Posterior vena cava (tissue), 2 donors: ENCODE measurements at regions of chr1 and their contacts with region 1.

Region 1: GRCh38 chr1:36099681-36100341 is 11.1 kb downstream of the ADPRS start:
- DNase-seq: peak; percentile 92

Region 2: GRCh38 chr1:34129626-34130025 is 1970.2 kb before region 1 on chr1:
- intact Hi-C with region 1: loop called in 1 of 2 experiments (anchors 10 kb)
- DNase-seq: no peak

Region 3: GRCh38 chr1:36014722-36015220 is 85.0 kb before region 1 on chr1:
- intact Hi-C with region 1: no loop called
- DNase-seq: no peak

Region 4: GRCh38 chr1:36149237-36149972 is 49.6 kb after region 1 on chr1 and contains the start of gene TRAPPC3:
- intact Hi-C with region 1: loop called in 1 of 2 experiments (anchors 10 kb)
- DNase-seq: peak; percentile 100
- total RNA-seq, gene TRAPPC3: 51.4 to 54.7 TPM

Region 5: DNA sequence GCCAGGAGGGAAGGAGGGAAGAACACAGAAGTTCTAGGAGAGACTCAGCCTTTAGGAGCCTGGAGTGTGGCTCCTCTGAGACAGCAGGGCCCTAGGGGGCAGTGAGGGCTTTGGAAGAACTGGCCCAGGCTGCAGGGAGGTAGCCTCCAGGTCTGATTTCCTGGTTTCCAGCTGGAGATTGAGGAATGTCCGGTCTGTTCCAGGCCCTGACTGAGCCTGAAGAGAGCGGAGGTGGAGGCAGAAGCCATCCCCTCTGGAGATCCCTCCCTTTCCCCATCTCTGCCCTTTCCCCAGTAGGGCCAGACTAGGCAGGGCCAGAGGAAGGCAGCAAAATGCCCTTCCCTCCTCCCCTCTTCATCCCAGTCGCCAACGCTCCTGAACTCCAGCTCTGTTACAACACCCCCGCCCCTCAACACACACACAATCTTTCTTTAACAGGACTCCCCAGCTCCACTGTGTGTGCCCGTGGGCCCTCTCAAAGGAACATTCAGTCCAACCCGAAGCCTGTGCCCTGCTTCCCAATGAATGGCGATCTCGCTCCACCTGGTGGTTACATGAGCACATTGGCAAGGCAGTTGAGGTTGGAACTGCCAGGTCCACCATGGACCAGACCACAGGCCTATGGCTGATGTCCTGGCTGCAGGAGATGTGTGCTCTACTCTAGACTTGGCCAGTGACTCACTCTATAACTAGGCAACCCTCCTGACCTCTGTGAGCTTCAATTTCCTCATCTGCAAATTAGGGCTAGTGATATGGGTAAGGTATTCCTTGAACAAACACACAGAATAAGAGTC is 88.2 kb after region 1 on chr1:
- intact Hi-C with region 1: loop called (anchors 2 to 5 kb)
- DNase-seq: peak; percentile 94

Region 6: DNA sequence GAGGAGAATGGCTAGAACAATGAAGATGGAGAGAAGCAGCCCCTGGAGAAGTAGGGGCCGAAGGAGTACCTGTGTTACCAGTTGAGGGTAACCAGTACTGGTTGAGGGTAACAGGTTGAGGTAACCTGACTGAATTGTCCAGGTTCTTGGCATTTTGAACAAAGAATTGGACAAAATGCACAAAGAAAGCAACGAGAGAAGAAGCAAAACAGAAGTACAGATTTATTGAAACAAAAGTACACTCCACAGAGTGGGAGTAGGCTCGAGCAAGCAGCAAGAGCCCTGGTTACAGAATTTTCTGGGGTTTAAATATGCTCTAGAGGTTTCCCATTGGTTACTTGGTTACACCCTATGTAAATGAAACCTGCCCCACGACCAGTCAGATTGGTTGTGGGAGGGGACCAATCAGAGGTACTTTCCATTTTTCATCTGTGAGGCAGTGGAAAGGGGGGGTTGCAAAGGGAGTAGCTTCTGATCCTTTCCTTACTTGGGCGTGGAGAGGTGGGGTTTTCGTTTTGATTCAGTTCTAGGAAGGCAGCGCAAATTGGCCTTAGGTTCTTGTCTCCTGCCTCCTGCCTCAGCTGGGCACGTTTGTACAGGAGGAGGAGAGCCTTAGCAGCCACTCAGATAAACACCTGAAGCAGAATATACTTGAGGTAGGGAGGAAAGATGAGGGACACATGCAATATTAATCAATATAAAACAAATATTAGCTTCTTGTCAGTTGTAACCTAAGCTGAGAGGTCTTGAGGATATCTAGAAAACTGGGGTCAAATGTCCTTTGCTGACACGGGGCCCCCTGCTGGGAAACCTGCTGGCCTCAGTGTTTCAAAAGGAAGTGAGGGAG is 312.1 kb after region 1 on chr1:
- intact Hi-C with region 1: loop called in 1 of 2 experiments (anchors 10 kb)
- DNase-seq: no peak